ENCODE measurements at regions of chr5 and their contacts with region 1.

Region 1: GRCh38 chr5:107425541-107426256 is 245.0 kb downstream of the EFNA5 start:
- DNase-seq: no peak
- ATAC-seq: no peak
- H3K4me3 ChIP-seq: no peak overlapping the region
- H3K27ac ChIP-seq: no peak overlapping the region
- H3K4me1 ChIP-seq: no peaks in the 10 kb centered on the region
- H3K27me3 ChIP-seq: no peaks in the 10 kb centered on the region; a peak in 1 of 4 replicates
- CTCF ChIP-seq: no peak
- EP300 ChIP-seq: no peak
- POLR2A ChIP-seq: no peak
- RAD21 ChIP-seq: no peak

Region 2: GRCh38 chr5:107437986-107438520 is 12.4 kb after region 1 on chr5:
- CTCF ChIA-PET with region 1: interaction called, 6 read pairs
- POLR2A ChIA-PET with region 1: interaction called, 3 read pairs
- RAD21 ChIA-PET with region 1: interaction called, 4 read pairs
- SMC1A ChIA-PET with region 1: interaction called, 12 read pairs
- in situ Hi-C with region 1: no loop called
- intact Hi-C with region 1: no loop called
- DNase-seq: no peak
- ATAC-seq: no peak
- H3K4me3 ChIP-seq: no peak overlapping the region
- H3K27ac ChIP-seq: no peak overlapping the region
- H3K4me1 ChIP-seq: no peaks in the 10 kb centered on the region
- H3K27me3 ChIP-seq: no peaks in the 10 kb centered on the region
- CTCF ChIP-seq: no peak
- EP300 ChIP-seq: no peak
- POLR2A ChIP-seq: no peak
- RAD21 ChIP-seq: no peak